ENCODE measurements at regions of chr3 and their contacts with region 1.

Region 1: DNA sequence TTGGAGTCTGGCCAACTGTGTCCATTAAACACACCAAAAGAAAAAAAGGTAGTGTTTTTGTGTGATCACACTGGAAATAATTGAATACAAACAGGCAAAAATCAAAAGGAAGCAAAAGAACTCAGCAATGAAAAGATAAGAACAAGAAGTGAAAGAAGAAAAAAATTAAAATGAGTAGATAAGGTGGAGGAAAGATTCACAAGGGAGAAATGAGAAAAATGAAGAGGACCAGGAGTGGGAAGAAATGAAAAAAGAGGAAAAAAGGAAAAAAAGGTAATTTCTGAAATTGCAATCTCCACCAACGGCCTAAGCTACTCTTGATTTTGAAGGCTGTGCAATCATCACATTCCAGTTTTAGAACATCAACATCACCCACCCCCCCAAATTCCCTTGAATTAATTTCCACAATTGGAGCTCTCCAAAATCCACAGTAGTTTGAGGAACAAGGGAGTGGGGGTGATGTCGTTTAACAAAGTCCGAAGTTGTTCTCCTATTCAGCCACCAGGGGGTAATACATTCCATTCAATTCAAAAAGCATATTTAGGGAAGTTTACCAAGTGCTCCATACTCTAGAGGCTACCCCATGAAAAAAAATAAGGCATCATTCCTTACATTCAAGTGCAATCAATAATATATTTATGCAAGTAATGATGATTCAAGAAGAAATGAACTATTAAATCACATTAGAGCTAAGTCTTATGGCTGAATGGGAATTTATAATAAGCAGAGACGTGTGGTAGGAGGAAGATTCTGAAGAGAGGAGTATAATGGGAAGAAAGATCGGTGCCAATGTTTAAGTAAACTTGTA is 37.4 kb downstream of the ZNF860 start:
- DNase-seq: peak; percentile 70 to 73 (median 72)
- H3K4me3 ChIP-seq: no peak overlapping the region
- H3K27ac ChIP-seq: no peak overlapping the region
- H3K4me1 ChIP-seq: no peaks in the 10 kb centered on the region
- H3K27me3 ChIP-seq: no peaks in the 10 kb centered on the region

Region 2: DNA sequence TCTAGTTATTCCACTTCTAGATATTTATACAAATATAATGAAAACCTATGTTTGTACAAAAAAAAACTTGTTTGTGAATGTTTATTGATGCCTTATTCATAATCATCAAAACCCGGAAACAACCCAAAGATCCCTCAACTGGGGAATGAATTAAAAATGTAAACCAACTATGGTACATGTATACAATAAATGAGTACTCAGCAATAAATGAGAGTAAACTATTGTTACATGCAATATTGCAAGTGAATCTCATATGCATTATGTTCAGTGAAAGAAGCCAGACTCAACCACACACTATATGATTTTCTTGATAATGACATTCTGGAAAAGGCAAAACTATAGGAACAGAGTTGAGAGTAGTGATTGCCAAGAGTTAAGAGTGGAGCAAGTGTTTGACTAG is 25.1 kb before region 1 on chr3:
- CTCF ChIA-PET with region 1: no interaction called
- POLR2A ChIA-PET with region 1: no interaction called
- DNase-seq: no peak
- H3K4me3 ChIP-seq: no peak overlapping the region
- H3K27ac ChIP-seq: no peak overlapping the region
- H3K4me1 ChIP-seq: no peaks in the 10 kb centered on the region
- H3K27me3 ChIP-seq: no peaks in the 10 kb centered on the region

Region 3: DNA sequence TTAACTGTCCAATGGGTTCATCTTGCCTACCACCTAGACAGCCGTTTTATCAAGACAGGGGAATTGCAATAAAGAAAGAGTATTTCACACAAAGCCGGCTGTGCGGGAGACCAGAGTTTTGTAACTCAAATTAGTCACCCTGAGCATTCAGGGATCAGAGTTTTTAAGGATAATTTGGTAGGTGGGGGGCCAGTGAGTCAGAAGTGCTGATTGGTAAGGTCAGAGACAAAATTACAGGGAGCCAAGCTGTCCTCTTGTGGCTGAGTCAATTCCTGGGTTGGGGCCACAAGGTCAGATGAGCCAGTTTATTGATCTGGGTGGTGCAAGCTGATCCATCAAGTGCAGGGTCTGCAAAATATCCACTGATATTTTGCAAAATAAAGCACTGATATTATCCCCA is 57.6 kb after region 1 on chr3:
- CTCF ChIA-PET with region 1: no interaction called
- POLR2A ChIA-PET with region 1: no interaction called
- DNase-seq: no peak
- H3K4me3 ChIP-seq: no peak overlapping the region
- H3K27ac ChIP-seq: no peak overlapping the region
- H3K4me1 ChIP-seq: peaks cover 0 to 4% (median 0%) of the 10 kb centered on the region in 4 experiments
- H3K27me3 ChIP-seq: no peaks in the 10 kb centered on the region

Region 4: DNA sequence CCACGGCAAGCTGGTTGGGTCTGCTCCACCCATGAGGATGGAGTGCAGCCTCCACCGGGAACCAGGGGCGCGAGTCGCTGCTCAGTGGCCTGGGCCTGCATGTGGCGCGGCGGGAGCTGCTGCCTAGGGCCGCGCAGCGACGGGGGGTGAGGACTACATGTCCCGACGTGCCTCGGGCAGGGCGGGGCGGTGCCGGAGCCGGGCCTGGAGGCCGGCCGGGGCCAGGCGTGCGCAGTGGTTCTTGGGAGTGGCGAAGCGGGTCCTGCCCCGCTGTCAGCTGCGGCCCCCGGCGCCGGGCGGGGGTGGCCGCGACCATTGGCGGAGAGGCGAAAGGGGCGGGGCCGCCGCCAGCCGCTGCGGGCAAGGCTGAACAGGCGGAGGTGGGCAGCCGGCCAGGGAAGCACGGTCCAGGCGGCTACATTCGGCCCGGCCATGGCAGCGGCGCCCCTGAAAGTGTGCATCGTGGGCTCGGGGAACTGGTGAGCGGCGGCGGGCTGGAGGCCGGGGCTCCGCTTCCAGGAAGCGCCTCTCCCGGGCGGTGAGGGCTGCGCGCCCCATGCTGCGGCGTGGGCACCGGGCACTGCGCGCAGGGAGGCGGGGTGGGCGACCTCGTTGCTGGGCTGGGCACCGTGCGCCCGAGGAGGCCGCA is 87.4 kb after region 1 on chr3 and contains the start of gene GPD1L:
- CTCF ChIA-PET with region 1: no interaction called
- POLR2A ChIA-PET with region 1: no interaction called
- DNase-seq: peak; percentile 89 to 94 (median 93)
- H3K4me3 ChIP-seq: peak within 1 kb of the TSS; percentile 53 to 85 (median 66)
- H3K27ac ChIP-seq: no peak within 1 kb of the TSS
- H3K4me1 ChIP-seq: peaks cover 0 to 15% (median 14%) of the 10 kb centered on the region in 4 experiments
- H3K27me3 ChIP-seq: no peaks in the 10 kb centered on the region

Region 5: DNA sequence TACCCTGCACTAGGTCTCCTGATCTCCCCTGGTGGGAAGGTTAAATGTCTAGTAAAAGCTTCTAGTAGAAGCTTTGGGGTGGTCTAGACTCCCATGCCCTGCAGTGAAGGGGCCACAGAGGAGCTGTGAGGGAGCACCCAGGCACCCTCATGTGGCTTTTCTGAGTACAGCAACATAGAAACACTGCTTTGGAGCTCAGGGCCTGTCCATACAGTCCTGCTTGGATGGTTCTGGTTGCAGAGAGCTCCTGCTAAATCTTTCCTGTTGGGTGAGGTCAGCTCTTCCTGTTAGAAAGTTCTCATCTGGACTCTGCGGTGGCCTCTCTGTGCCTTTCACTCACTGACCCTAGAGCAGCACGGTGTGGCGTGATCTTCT is 135.2 kb after region 1 on chr3:
- CTCF ChIA-PET with region 1: interaction called, 34 read pairs
- POLR2A ChIA-PET with region 1: interaction called, 4 read pairs
- DNase-seq: peak in 1 of 3 donors; percentile 10
- H3K4me3 ChIP-seq: no peak overlapping the region
- H3K27ac ChIP-seq: no peak overlapping the region
- H3K4me1 ChIP-seq: no peaks in the 10 kb centered on the region
- H3K27me3 ChIP-seq: no peaks in the 10 kb centered on the region

Measured in common myeloid progenitor, CD34-positive (primary cell).